ENCODE measurements at regions of chr9 and their contacts with region 1.

Region 1: GRCh38 chr9:112333639-112334431 is 416 bp upstream of the PTBP3 start:
- DNase-seq: peak; percentile 93
- H3K4me3 Mint-ChIP-seq: peak overlapping the region; percentile 90
- H3K27ac Mint-ChIP-seq: peak overlapping the region; percentile 95
- H3K4me1 Mint-ChIP-seq: peaks cover 21% of the 10 kb centered on the region
- H3K27me3 Mint-ChIP-seq: no peaks in the 10 kb centered on the region

Region 2: DNA sequence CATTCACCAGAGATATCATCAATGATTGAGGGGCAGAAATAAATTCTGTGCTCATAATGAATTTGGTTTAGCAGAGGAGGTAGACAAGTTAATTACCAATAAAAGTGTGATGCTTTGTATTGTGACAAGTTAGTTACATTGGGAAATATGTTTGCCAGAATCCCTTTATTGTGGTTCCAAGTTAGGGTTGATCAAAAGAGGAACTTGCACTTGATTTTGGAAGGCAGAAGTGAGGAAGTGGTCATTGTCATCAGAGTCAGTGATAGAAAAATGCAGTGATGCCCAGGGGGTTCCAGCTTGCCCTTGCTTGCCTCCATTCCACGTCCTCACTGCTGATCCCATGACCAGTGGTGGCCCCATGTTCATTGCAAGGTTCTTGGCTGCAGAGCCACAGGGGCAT is 1824.0 kb before region 1 on chr9:
- CTCF ChIA-PET with region 1: no interaction called
- intact Hi-C with region 1: no loop called
- DNase-seq: no peak
- H3K4me3 Mint-ChIP-seq: no peak overlapping the region
- H3K27ac Mint-ChIP-seq: no peak overlapping the region
- H3K4me1 Mint-ChIP-seq: no peaks in the 10 kb centered on the region
- H3K27me3 Mint-ChIP-seq: peaks cover 4% of the 10 kb centered on the region

Region 3: DNA sequence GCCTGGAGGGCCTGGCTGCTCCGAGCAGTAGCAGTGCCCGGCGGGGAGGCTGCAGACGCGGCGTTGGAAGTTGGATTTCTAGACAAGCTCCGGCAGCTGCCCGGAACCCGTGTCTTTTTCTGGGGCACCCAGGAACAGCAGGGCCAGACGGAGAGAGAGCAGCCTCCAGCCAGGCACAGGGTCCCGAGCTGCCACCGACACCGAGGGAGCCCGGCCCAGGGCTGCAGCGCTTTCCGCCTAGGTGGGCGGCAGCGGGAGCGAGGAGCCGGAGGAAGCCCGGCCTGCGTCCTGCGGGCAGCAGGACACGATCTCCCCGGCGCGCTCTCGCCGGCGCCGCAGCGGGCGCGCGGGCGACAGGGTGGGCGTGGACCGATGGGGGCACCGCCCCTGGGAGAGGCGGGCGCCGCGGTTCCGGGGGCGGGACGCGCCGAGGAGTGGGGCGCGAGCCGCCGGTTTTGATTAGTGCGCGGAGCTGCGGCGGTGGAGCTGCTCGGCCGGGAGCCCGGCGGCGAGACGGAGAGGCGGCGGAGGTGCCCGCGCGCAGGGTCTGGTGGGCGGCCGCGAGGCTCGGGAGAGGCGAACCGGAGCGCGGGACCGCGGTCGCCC is 437.4 kb before region 1 on chr9 and contains the start of gene UGCG:
- CTCF ChIA-PET with region 1: no interaction called
- intact Hi-C with region 1: loop called (anchors 1 kb)
- DNase-seq: peak; percentile 86
- H3K4me3 Mint-ChIP-seq: peak within 1 kb of the TSS; percentile 81
- H3K27ac Mint-ChIP-seq: peak within 1 kb of the TSS; percentile 87
- H3K4me1 Mint-ChIP-seq: peaks cover 17% of the 10 kb centered on the region
- H3K27me3 Mint-ChIP-seq: no peaks in the 10 kb centered on the region
- total RNA-seq, gene UGCG: 8.8 to 10.5 TPM

Region 4: GRCh38 chr9:112097712-112098688 is 235.8 kb before region 1 on chr9:
- CTCF ChIA-PET with region 1: interaction called, 11 read pairs
- intact Hi-C with region 1: loop called (anchors 1 kb)
- DNase-seq: peak; percentile 83
- H3K4me3 Mint-ChIP-seq: no peak overlapping the region
- H3K27ac Mint-ChIP-seq: no peak overlapping the region
- H3K4me1 Mint-ChIP-seq: peaks cover 16% of the 10 kb centered on the region
- H3K27me3 Mint-ChIP-seq: no peaks in the 10 kb centered on the region

Region 5: DNA sequence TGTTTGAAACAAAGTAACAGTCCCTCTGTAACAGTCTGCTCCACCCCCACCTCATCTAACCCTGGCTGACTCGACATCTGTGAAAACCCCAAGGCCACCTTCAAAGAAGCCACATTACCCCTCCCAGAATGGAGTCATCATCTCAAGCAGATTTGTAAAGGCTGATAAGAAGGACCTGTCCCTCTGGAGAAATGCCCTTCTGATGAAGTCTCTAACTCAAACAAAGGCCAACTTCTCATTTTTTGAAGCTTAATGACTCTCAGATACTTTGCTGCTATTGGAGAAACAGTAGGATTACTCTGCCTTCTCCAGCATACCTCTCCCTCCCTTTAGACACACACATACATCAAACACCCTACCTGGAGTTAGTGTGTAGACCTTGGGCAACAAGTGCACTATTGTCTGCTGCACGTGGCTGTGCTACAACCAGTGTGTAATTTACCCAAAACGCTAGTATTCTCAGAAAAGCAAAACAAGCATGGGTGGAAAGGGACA is 153.4 kb before region 1 on chr9:
- CTCF ChIA-PET with region 1: interaction called, 3 read pairs
- intact Hi-C with region 1: loop called (anchors 1 kb)
- DNase-seq: peak; percentile 81
- H3K4me3 Mint-ChIP-seq: no peak overlapping the region
- H3K27ac Mint-ChIP-seq: peak overlapping the region; percentile 1
- H3K4me1 Mint-ChIP-seq: peaks cover 32% of the 10 kb centered on the region
- H3K27me3 Mint-ChIP-seq: peaks cover 20% of the 10 kb centered on the region

Region 6: GRCh38 chr9:112361601-112362000 is 27.8 kb after region 1 on chr9:
- CTCF ChIA-PET with region 1: interaction called, 7 read pairs
- intact Hi-C with region 1: loop called (anchors 1 kb)
- DNase-seq: no peak
- H3K4me3 Mint-ChIP-seq: no peak overlapping the region
- H3K27ac Mint-ChIP-seq: no peak overlapping the region
- H3K4me1 Mint-ChIP-seq: peaks cover 12% of the 10 kb centered on the region
- H3K27me3 Mint-ChIP-seq: no peaks in the 10 kb centered on the region

Region 7: DNA sequence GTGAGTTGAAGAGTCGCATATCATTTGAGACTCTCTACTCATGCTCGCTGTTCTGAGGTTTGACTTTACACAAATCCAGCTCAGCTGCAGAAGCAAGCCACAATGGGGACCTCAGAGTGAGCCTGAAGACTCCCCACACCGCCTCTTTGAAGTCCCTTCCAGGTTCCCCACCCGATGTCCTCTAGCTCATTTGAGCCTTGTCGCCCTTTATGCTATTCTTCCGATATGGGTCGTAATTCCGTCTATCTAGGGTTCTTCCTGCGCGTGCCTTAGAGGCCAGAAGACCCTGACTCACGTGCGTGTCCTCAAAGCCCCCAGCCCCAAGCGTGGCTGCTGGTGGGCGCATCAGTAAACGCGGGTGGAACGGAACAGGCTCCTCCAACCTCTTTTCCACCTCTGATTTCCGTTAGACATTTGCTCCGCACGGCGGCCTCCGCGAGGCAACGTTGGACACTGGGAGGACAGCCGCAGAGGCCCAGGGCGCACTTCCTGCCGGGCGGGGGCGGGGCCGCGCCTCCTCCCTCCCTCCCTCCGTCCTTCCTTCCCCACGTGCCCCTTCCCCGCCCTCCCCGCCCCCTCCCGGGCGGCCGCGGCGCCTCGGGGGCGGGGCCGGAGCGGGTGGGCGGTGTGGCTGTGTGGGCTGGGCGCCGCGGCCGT is 416.4 kb after region 1 on chr9 and contains the start of gene SNX30:
- CTCF ChIA-PET with region 1: no interaction called
- intact Hi-C with region 1: loop called (anchors 1 kb)
- DNase-seq: peak; percentile 84
- H3K4me3 Mint-ChIP-seq: peak within 1 kb of the TSS; percentile 81
- H3K27ac Mint-ChIP-seq: peak within 1 kb of the TSS; percentile 74
- H3K4me1 Mint-ChIP-seq: peaks cover 63% of the 10 kb centered on the region
- H3K27me3 Mint-ChIP-seq: no peaks in the 10 kb centered on the region
- total RNA-seq, gene SNX30: 4.1 to 4.6 TPM

Measured in activated naive CD4-positive, alpha-beta T cell treated with anti-CD3 and anti-CD28 coated beads for 36 hours (primary cell).